Astrocyte of the cerebellum (primary cell): ENCODE measurements at regions of chr3 and their contacts with region 1.

Region 1: GRCh38 chr3:10764259-10765051 is 51.6 kb upstream of the SLC6A11 start:
- DNase-seq: no peak
- H3K4me3 ChIP-seq: no peak overlapping the region
- CTCF ChIP-seq: no peak

Region 2: DNA sequence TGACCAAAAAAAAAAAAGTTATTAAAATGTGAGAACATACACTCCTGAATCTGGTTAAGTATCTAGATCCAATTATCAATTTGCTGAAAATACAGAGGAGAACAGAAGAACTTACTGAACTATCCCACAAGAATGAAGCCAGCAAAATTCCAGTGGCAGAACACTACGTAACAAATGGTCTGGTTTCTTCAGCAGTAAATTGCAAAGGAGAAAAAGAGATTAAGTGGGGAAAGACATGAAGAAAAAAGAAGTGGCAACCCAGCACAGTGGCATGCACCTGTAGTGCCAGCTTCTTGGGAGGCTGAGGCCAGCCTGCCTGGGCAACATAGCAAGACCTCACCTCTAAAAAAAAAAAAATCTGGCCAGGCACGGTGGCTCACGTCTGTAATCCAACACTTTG is 1272.9 kb before region 1 on chr3:
- in situ Hi-C with region 1: no loop called
- DNase-seq: no peak
- H3K4me3 ChIP-seq: no peak overlapping the region
- CTCF ChIP-seq: no peak

Region 3: GRCh38 chr3:10722911-10723310 is 41.5 kb before region 1 on chr3:
- in situ Hi-C with region 1: loop called (anchors 5 kb)
- DNase-seq: no peak
- H3K4me3 ChIP-seq: no peak overlapping the region
- CTCF ChIP-seq: no peak

Region 4: GRCh38 chr3:10806006-10806405 is 41.6 kb after region 1 on chr3:
- in situ Hi-C with region 1: loop called (anchors 5 kb)
- DNase-seq: no peak
- H3K4me3 ChIP-seq: no peak overlapping the region
- CTCF ChIP-seq: no peak